Heart right ventricle (tissue), 16 donors: ENCODE measurements at regions of chr9 and their contacts with region 1.

Region 1: DNA sequence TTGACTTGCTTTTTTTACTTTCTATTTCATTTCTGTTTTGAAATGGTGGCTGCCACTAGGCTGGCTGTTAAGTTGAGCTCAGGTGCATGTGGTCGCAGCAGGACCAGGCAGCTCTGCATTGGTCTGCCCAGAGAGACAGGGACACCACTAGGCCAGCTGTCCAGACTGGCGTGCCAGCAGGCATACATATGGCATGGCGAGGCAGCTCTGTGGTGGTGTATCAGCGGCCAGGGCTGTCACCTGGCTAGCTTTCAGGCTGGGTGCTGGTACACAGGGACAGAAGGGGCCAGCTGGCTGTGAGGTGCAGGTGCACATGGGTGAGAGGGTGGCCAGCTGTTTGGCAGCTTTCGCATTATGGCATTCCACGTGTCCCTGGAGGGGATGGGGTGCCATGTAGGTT is 654.0 kb upstream of the ACO1 start:
- DNase-seq: no peak
- ATAC-seq: no peak
- H3K4me3 ChIP-seq: no peak overlapping the region
- H3K27ac ChIP-seq: no peak overlapping the region
- H3K4me1 ChIP-seq: no peaks in the 10 kb centered on the region
- H3K27me3 ChIP-seq: no peaks in the 10 kb centered on the region
- CTCF ChIP-seq: no peak

Region 2: GRCh38 chr9:31683116-31683515 is 47.3 kb before region 1 on chr9:
- intact Hi-C with region 1: loop called in 1 of 10 experiments (anchors 10 kb)
- DNase-seq: no peak
- ATAC-seq: no peak
- H3K4me3 ChIP-seq: no peak overlapping the region
- H3K27ac ChIP-seq: no peak overlapping the region
- H3K4me1 ChIP-seq: no peaks in the 10 kb centered on the region
- H3K27me3 ChIP-seq: no peaks in the 10 kb centered on the region
- CTCF ChIP-seq: no peak

Region 3: GRCh38 chr9:32442433-32442832 is 712.0 kb after region 1 on chr9:
- intact Hi-C with region 1: no loop called
- DNase-seq: no peak
- ATAC-seq: no peak
- H3K4me3 ChIP-seq: no peak overlapping the region
- H3K27ac ChIP-seq: no peak overlapping the region
- H3K4me1 ChIP-seq: no peaks in the 10 kb centered on the region
- H3K27me3 ChIP-seq: no peaks in the 10 kb centered on the region
- CTCF ChIP-seq: no peak